IMR-90 (cell line): ENCODE measurements at regions of chr10 and their contacts with region 1.

Region 1: GRCh38 chr10:35126530-35127296 is at the start of gene CREM:
- DNase-seq: peak; percentile 97
- ATAC-seq: peak; percentile 93
- H3K4me3 ChIP-seq: peak within 1 kb of the TSS; percentile 95
- H3K27ac ChIP-seq: peak within 1 kb of the TSS; percentile 96
- H3K4me1 ChIP-seq: peaks cover 3% of the 10 kb centered on the region
- H3K27me3 ChIP-seq: no peaks in the 10 kb centered on the region
- CTCF ChIP-seq: peak; percentile 78
- POLR2A ChIP-seq: peak; percentile 97
- RAD21 ChIP-seq: peak; percentile 49
- total RNA-seq, gene CREM: 40.5 and 48.0 TPM in 2 replicates

Region 2: GRCh38 chr10:34815185-34816084 is 311.3 kb before region 1 on chr10 and contains the start of gene PARD3:
- CTCF ChIA-PET with region 1: no interaction called
- POLR2A ChIA-PET with region 1: no interaction called
- dilution Hi-C with region 1: no loop called
- in situ Hi-C with region 1: no loop called
- intact Hi-C with region 1: no loop called
- DNase-seq: peak; percentile 51
- ATAC-seq: peak; percentile 85
- H3K4me3 ChIP-seq: peak within 1 kb of the TSS; percentile 98
- H3K27ac ChIP-seq: peak within 1 kb of the TSS; percentile 93
- H3K4me1 ChIP-seq: peaks cover 4% of the 10 kb centered on the region
- H3K27me3 ChIP-seq: peaks cover 2% of the 10 kb centered on the region; the same call in 1 of the 2 replicates
- CTCF ChIP-seq: no peak
- POLR2A ChIP-seq: no peak
- RAD21 ChIP-seq: no peak
- total RNA-seq, gene PARD3: 34.2 and 37.5 TPM in 2 replicates

Region 3: DNA sequence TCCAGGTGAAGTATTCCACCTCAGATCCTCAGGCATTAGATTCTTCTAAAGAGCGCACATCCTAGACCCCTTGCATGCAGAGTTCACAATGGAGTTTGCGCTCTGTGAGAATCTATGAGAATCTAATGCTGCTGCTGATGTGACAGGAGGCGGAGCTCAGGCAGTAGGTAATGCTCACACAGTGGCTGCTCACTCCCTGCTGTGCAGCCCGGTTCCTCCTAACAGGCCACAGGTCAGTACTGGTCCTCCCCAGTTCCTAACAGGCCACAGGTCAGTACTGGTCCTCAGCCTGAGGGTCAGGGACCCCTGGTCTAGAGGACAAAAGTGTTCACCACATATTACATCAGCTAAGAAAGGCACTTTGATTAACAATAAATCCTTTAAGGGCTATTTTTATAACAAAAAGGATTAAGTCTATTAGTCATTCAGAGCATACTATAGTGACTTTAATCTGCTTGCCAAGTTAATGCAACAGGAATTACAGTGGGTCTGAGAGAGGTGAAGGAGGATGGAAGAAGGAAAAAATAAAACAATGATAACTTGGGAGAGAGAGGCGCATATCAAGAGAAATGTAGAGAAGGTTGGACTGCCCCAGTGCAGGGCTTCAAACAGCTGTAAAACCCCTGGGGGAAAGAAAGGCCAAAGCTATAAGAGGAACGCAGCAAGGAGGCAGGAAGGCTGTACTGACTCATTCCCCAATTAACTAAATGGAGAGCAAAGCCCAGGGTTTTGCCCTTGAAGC is 85.8 kb before region 1 on chr10:
- CTCF ChIA-PET with region 1: no interaction called
- POLR2A ChIA-PET with region 1: no interaction called
- dilution Hi-C with region 1: no loop called
- in situ Hi-C with region 1: no loop called
- intact Hi-C with region 1: no loop called
- DNase-seq: peak; percentile 63
- ATAC-seq: peak; percentile 70
- H3K4me3 ChIP-seq: no peak overlapping the region
- H3K27ac ChIP-seq: peak overlapping the region; percentile 21
- H3K4me1 ChIP-seq: peaks cover 18% of the 10 kb centered on the region
- H3K27me3 ChIP-seq: no peaks in the 10 kb centered on the region
- CTCF ChIP-seq: no peak
- POLR2A ChIP-seq: no peak
- RAD21 ChIP-seq: no peak

Region 4: DNA sequence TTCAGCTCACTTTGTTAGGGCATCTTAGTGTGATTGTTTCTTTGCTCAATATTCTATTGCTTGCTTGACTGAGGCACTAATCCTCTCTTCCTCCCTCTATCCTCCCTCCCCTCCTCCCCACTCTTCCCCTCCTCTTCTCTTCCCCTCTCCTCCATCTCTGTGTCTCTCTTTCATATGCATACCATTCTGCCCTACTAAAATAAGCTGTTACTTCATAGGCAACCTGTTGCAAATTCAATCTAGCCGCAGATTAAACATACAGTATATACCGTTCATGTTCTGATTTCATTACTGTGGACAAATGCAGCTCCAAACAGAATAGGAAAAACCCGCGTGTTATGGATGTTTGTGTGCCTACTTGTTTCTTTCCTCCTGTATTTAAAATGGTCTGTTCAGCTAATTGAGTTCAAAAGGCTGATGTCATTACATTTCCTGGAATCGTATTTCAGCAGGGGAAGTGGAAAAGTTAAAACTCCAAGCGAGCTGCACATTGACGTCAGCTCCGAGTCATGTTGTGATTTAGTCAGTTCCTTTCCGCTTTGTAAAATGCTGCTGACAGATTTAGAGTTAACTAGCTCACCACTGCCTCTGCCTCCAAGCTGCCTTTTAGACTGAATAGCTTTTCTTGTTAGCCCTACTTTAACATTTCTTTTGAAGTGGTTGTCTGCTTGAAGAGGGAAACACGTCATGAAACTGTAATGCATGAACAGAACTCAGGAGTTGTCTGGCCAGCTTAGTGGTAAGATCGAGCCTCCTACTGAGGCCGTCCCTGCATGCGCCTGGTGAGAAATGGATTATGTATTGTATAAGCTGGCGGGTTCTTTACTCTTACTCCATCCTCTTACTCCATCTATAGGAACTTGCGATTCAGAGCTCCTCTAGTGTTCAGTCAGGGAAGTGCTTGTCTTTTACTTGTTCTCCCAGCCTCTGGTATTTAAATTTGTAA is 68.9 kb after region 1 on chr10:
- CTCF ChIA-PET with region 1: interaction called, 11 read pairs
- POLR2A ChIA-PET with region 1: interaction called, 9 read pairs
- dilution Hi-C with region 1: no loop called
- in situ Hi-C with region 1: no loop called
- intact Hi-C with region 1: loop called (anchors 1 kb)
- DNase-seq: peak; percentile 99
- ATAC-seq: peak; percentile 92
- H3K4me3 ChIP-seq: peak overlapping the region; percentile 44
- H3K27ac ChIP-seq: peak overlapping the region; percentile 91
- H3K4me1 ChIP-seq: peaks cover 5% of the 10 kb centered on the region
- H3K27me3 ChIP-seq: no peaks in the 10 kb centered on the region
- CTCF ChIP-seq: peak; percentile 83
- POLR2A ChIP-seq: peak; percentile 70
- RAD21 ChIP-seq: peak; percentile 62

Region 5: DNA sequence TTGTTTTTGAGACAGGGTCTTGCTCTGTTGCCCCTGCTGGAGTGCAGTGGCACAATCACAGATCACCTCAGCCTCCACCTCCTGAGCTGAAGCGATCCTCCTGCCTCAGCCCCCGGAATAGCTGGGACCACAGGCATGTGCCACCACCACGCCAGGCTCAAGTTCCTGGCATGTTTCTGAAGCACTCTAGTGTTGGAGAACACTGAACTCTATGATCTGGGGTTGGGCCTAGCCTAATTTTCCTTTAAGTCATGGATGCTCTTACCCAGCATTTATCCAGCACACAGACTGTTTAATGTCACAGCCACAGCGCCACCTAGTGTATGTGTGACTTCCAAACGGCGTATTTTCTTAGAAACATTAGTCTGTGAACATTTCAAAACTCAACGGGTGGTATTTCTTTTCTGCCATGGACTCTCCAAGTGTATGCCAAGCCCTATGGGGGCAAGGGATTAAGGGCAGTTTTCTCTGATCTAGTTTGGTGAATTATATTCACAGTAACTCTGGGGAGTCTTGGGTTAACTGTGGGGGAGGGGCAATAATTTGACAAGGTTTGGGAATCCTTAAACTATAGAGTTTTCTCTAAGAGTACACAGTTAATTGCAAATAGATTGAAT is 91.7 kb after region 1 on chr10:
- CTCF ChIA-PET with region 1: interaction called, 5 read pairs
- POLR2A ChIA-PET with region 1: no interaction called
- dilution Hi-C with region 1: no loop called
- in situ Hi-C with region 1: loop called (anchors 5 kb)
- intact Hi-C with region 1: no loop called
- DNase-seq: peak; percentile 90
- ATAC-seq: peak; percentile 91
- H3K4me3 ChIP-seq: no peak overlapping the region
- H3K27ac ChIP-seq: no peak overlapping the region
- H3K4me1 ChIP-seq: no peaks in the 10 kb centered on the region; the same call in 1 of the 2 replicates
- H3K27me3 ChIP-seq: no peaks in the 10 kb centered on the region
- CTCF ChIP-seq: peak; percentile 87
- POLR2A ChIP-seq: no peak
- RAD21 ChIP-seq: peak; percentile 79

Region 6: DNA sequence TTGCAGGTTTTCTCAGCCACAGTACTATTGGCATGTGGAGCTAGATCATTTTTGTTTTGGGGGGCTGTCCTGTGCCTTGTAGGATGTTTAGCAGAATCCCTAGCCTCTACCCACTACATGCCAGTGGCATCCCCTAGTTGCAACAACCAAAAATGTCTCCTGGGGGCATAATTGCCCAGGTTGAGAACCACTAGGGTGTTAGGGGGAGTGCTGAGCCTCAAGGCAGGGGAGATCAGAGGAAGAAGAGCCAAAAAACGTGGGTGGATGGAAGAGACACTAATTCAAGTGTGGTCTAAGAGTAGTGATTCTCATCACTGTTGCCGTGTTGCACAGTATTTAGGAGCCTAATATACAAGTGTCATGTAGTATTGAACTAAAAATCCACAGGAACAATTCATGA is 177.9 kb after region 1 on chr10:
- CTCF ChIA-PET with region 1: no interaction called
- POLR2A ChIA-PET with region 1: no interaction called
- dilution Hi-C with region 1: no loop called
- in situ Hi-C with region 1: no loop called
- intact Hi-C with region 1: no loop called
- DNase-seq: no peak
- ATAC-seq: no peak
- H3K4me3 ChIP-seq: no peak overlapping the region
- H3K27ac ChIP-seq: no peak overlapping the region
- H3K4me1 ChIP-seq: peaks cover 2% of the 10 kb centered on the region; the same call in 1 of the 2 replicates
- H3K27me3 ChIP-seq: no peaks in the 10 kb centered on the region
- CTCF ChIP-seq: no peak
- POLR2A ChIP-seq: no peak
- RAD21 ChIP-seq: no peak

Region 7: GRCh38 chr10:35328404-35329037 is 201.8 kb after region 1 on chr10:
- CTCF ChIA-PET with region 1: no interaction called
- POLR2A ChIA-PET with region 1: no interaction called
- dilution Hi-C with region 1: no loop called
- in situ Hi-C with region 1: no loop called
- intact Hi-C with region 1: loop called (anchors 5 kb)
- DNase-seq: peak; percentile 95
- ATAC-seq: peak; percentile 45
- H3K4me3 ChIP-seq: no peak overlapping the region
- H3K27ac ChIP-seq: peak overlapping the region; percentile 10; the same call in 1 of the 2 replicates
- H3K4me1 ChIP-seq: peaks cover 31% of the 10 kb centered on the region
- H3K27me3 ChIP-seq: no peaks in the 10 kb centered on the region
- CTCF ChIP-seq: no peak
- POLR2A ChIP-seq: no peak
- RAD21 ChIP-seq: 0 out of 2 replicates have a peak, but pooled peaks have one; percentile 9

Region 8: DNA sequence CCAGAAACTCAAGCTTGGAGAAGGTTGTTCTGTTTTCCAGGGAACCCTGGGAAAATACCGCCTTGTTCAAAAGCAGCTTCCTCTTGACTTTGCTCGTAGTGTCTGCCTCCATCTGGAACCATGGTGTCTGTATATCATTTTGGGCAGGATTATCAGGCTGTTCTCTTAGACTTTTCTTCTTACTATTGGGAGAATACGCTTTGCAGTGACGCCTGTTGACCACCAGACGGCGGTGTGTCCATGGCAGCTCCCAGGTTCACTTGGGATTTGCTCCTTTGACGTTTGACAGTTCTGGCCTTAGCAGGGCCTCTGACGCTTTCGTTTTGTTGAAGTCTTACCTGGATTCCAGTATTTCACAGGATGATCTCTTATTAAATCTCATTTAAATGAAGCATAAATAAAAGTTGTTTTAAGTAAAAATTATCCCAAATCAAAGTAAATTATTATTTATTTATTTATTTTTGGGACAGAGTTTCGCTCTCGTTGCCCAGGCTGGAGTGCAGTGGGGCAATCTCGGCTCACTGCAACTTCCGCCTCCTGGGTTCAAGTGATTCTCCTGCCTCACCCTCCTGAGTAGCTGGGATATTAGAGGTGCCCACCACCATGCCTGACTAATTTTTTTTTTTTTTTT is 436.7 kb after region 1 on chr10:
- CTCF ChIA-PET with region 1: no interaction called
- POLR2A ChIA-PET with region 1: no interaction called
- dilution Hi-C with region 1: no loop called
- in situ Hi-C with region 1: loop called (anchors 25 kb)
- intact Hi-C with region 1: loop called (anchors 10 kb)
- DNase-seq: peak; percentile 76
- ATAC-seq: peak; percentile 64
- H3K4me3 ChIP-seq: no peak overlapping the region
- H3K27ac ChIP-seq: no peak overlapping the region
- H3K4me1 ChIP-seq: peaks cover 6% of the 10 kb centered on the region
- H3K27me3 ChIP-seq: no peaks in the 10 kb centered on the region
- CTCF ChIP-seq: peak; percentile 92
- POLR2A ChIP-seq: no peak
- RAD21 ChIP-seq: peak; percentile 83

Region 9: GRCh38 chr10:36888929-36889573 is 1762.3 kb after region 1 on chr10:
- CTCF ChIA-PET with region 1: no interaction called
- POLR2A ChIA-PET with region 1: no interaction called
- dilution Hi-C with region 1: no loop called
- in situ Hi-C with region 1: loop called (anchors 25 kb)
- intact Hi-C with region 1: loop called (anchors 10 kb)
- DNase-seq: peak; percentile 3
- ATAC-seq: no peak; the same call in 1 of the 2 replicates
- H3K4me3 ChIP-seq: no peak overlapping the region
- H3K27ac ChIP-seq: no peak overlapping the region
- H3K4me1 ChIP-seq: no peaks in the 10 kb centered on the region
- H3K27me3 ChIP-seq: no peaks in the 10 kb centered on the region; the same call in 1 of the 2 replicates
- CTCF ChIP-seq: peak; percentile 21; the same call in 1 of the 2 replicates
- POLR2A ChIP-seq: no peak
- RAD21 ChIP-seq: peak; percentile 29